Posterior vena cava (tissue), 2 donors: ENCODE measurements at regions of chr12 and their contacts with region 1.

Region 1: GRCh38 chr12:108914121-108914531 is 34.2 kb downstream of the DAO start:
- DNase-seq: peak; percentile 71

Region 2: GRCh38 chr12:108895183-108895802 is 18.8 kb before region 1 on chr12:
- intact Hi-C with region 1: loop called in 1 of 2 experiments (anchors 2 kb)
- DNase-seq: peak; percentile 32

Region 3: DNA sequence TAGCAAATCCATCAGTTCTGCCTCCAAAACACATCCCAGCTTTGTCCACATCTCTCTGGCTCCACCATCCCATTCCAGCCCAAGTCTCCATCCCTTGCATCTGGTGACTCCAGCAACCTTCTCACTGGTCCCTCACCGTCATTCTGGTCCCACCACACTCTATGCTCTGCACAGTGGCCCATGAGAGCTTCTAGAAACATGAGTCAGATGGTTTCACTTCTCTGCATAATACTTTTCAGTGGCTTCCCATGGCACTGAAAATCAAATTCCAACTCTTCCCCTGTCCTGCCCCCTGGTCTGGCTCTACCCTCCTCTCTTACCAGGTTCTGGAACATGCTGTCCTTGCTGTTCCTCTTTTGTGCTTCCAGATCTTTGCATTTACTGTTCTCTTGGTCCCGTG is 1151.4 kb after region 1 on chr12:
- intact Hi-C with region 1: loop called in 1 of 2 experiments (anchors 5 kb)
- DNase-seq: no peak